A549 (cell line): ENCODE measurements at regions of chr2 and their contacts with region 1.

Region 1: GRCh38 chr2:172102391-172103278 is at the start of gene DLX2:
- DNase-seq: peak; percentile 85 to 91
- ATAC-seq: peak; percentile 66 to 81
- H3K4me3 ChIP-seq: peak within 1 kb of the TSS; percentile 74
- H3K27ac ChIP-seq: peak within 1 kb of the TSS; percentile 45 to 74; a peak in 5 of 6 replicates
- H3K4me1 ChIP-seq: peaks cover 26% of the 10 kb centered on the region
- CTCF ChIP-seq: no peak
- EP300 ChIP-seq: no peak
- POLR2A ChIP-seq: 0 out of 2 replicates have a peak, but pooled peaks have one; percentile 20
- RAD21 ChIP-seq: 0 out of 5 replicates have a peak, but pooled peaks of 1 of the 2 experiments have one; percentile 6
- polyA plus RNA-seq, gene DLX2: 0.04 TPM in 2 replicates

Region 2: GRCh38 chr2:171703574-171704347 is 398.9 kb before region 1 on chr2:
- CTCF ChIA-PET with region 1: interaction called, 128 read pairs
- POLR2A ChIA-PET with region 1: interaction called, 5 read pairs
- DNase-seq: peak; percentile 11 to 54
- ATAC-seq: peak; percentile 30 to 81; a peak in 4 of 6 replicates
- H3K4me3 ChIP-seq: no peak overlapping the region
- H3K27ac ChIP-seq: no peak overlapping the region
- H3K4me1 ChIP-seq: peaks cover 35% of the 10 kb centered on the region
- CTCF ChIP-seq: peak; percentile 54
- EP300 ChIP-seq: no peak
- POLR2A ChIP-seq: no peak
- RAD21 ChIP-seq: peak; percentile 44 to 57; a peak in 4 of 5 replicates

Region 3: DNA sequence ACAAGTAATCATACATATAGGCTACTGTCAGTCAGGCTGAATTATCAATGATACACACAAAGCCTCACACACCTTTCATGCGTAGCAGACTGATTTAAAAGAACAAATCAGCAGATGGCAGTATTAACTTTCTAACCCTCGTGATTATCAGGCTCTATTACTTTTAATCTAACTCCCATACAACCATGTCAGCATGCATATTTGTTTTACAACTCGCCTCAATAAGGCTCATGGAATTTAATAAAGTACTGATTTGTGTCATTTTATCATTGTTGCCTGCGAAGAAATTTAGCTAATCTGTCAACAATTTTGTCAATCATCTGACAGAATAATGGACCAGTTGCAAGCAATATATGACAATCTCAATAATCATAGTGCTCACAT is 291.4 kb before region 1 on chr2:
- CTCF ChIA-PET with region 1: interaction called, 122 read pairs
- POLR2A ChIA-PET with region 1: no interaction called
- DNase-seq: peak; percentile 10 to 45
- ATAC-seq: peak; percentile 62 to 82; a peak in 4 of 6 replicates
- H3K4me3 ChIP-seq: no peak overlapping the region
- H3K27ac ChIP-seq: no peak overlapping the region
- H3K4me1 ChIP-seq: peaks cover 3% of the 10 kb centered on the region; the same call in 1 of the 3 replicates
- CTCF ChIP-seq: peak; percentile 71
- EP300 ChIP-seq: no peak
- POLR2A ChIP-seq: no peak
- RAD21 ChIP-seq: peak; percentile 79 to 80

Region 4: DNA sequence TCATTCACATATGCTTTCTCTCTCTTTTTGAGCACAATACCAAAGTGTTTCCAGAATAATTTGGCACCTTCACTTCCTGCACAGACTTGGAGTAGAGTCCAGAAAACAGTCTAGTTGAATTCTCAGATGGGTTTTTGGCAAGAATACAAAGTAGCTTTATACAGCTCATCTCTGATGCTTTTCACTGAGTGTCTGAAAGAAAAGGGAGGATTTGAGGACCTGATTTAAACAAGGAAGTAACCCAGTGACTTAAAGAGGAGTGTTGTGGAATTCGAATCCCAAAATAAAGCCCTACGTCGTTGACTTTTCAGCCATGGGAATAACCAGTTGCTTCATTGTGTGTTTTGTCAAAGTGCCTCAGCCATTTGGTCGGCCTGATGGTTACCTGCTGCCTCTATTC is 71.1 kb before region 1 on chr2:
- CTCF ChIA-PET with region 1: no interaction called
- POLR2A ChIA-PET with region 1: no interaction called
- DNase-seq: no peak
- ATAC-seq: no peak
- H3K4me3 ChIP-seq: no peak overlapping the region
- H3K27ac ChIP-seq: no peak overlapping the region
- H3K4me1 ChIP-seq: no peaks in the 10 kb centered on the region
- CTCF ChIP-seq: no peak
- EP300 ChIP-seq: no peak
- POLR2A ChIP-seq: no peak
- RAD21 ChIP-seq: no peak

Region 5: DNA sequence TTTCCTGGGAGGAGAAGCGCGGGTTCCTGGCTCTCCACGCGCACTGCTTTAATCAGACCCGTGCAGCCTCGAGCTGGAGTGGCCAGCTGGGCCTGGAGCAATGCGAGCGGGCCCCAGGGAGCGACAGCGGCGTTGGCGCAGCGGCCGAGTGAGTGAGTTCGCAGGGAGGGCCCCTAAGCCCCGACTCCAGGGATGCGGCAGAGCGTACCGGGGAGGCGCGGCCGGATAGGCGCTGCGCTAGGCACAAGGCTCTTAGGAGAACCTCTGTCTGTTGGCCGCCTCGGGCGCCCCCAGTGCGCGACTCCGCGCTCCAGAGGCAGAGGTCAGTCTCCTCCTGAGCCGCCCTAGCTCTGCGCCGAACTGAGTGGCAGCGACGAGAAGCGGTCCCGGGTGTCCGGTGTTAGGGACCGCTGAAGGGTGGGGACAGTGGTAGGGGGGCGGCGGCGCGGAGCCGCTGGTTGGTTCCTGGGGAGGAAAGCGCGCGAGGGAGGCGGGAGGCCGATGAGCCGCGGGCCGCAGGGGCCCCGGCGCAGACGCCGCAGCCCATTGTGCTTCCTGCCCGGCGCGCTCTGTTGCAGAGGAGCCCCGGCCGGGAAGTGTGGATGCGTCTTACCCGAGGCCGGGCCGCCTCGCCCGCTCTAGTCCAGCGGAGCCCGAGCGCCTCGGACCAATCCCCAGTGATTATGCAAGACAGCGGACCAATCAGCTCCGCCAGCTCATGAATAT is 17.7 kb before region 1 on chr2:
- CTCF ChIA-PET with region 1: interaction called, 9 read pairs
- POLR2A ChIA-PET with region 1: interaction called, 32 read pairs
- DNase-seq: peak; percentile 79 to 93
- ATAC-seq: peak; percentile 91 to 97
- H3K4me3 ChIP-seq: peak overlapping the region; percentile 79
- H3K27ac ChIP-seq: peak overlapping the region; percentile 79 to 90
- H3K4me1 ChIP-seq: no peaks in the 10 kb centered on the region
- CTCF ChIP-seq: no peak
- EP300 ChIP-seq: no peak
- POLR2A ChIP-seq: peak; percentile 77
- RAD21 ChIP-seq: peak in 1 of 2 experiments; percentile 9; a peak in 1 of 5 replicates

Region 6: DNA sequence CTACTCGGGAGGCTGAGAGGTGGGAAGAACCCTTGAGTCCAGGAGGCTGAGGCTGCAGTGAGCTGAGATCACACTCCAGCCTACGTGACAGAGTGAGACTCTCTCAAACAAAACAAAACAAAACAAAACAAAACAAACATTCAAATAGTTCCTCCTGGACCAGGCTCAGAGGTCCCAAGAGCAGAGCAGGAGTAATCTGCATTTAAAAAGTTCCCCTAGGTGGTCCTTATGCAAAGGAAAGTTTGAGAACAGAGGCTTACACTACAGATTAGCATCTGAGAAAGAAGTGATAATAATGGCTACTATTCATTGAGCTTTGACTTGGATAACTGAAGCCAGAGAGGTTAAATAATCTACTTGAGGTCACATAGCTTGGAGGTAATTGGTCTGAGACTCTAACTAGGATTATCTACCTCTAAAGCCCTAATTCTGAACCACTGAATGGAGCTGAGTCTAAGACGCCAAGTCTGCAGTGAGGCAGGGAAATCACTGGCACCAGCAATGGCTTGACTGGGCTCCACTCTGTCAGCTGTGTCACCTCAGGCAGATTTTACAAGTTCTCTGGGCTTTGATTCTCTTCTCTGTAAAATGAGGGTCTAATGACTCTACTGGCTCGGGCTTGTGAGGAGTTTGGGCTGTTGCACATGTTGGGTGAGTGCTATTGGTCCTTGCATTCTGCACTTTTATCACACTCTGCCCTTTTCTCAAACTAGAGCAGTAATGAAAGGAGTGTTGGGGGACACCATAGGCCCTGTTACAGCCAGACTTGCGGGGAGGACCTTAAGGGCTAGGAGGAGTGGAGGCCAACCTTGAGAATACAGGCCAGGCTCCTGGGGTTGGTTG is 29.3 kb after region 1 on chr2:
- CTCF ChIA-PET with region 1: interaction called, 32 read pairs
- POLR2A ChIA-PET with region 1: no interaction called
- DNase-seq: no peak
- ATAC-seq: no peak; a peak in 1 of 6 replicates
- H3K4me3 ChIP-seq: no peak overlapping the region
- H3K27ac ChIP-seq: no peak overlapping the region
- H3K4me1 ChIP-seq: no peaks in the 10 kb centered on the region
- CTCF ChIP-seq: no peak
- EP300 ChIP-seq: no peak
- POLR2A ChIP-seq: no peak
- RAD21 ChIP-seq: no peak